WTC11 (cell line): ENCODE measurements at regions of chr2 and their contacts with region 1.

Region 1: DNA sequence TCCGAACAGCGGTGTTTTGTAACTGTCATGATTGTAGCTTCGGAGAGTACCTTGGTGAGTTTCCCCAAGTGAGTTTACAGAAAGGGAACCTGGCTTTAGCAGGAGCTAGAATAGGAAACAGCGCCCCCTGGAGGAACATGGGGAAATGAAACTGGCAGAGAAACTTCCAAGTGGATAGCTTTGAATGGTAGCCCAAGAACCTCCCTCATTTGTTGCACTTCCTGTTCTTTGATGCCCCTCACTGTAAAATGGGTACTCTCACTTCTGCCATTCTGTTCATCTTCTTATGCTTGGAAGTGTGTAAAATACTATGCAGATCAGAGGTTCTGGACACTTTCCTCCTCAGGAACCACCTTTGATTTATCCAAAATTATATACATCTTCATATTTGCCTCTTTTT is 36.2 kb downstream of the CHST10 start:
- DNase-seq: peak; percentile 91
- ATAC-seq: peak; percentile 89
- H3K4me3 Mint-ChIP-seq: no peak overlapping the region
- H3K27ac Mint-ChIP-seq: no peak overlapping the region
- H3K4me1 Mint-ChIP-seq: 0 out of 2 replicates have a peak, but pooled peaks cover 2% of the 10 kb centered on the region
- H3K27me3 Mint-ChIP-seq: no peaks in the 10 kb centered on the region
- CTCF ChIP-seq: peak; percentile 95

Region 2: GRCh38 chr2:100272841-100273329 is 108.4 kb before region 1 on chr2:
- CTCF ChIA-PET with region 1: interaction called, 14 read pairs
- POLR2A ChIA-PET with region 1: no interaction called
- DNase-seq: no peak
- ATAC-seq: no peak
- H3K4me3 Mint-ChIP-seq: no peak overlapping the region
- H3K27ac Mint-ChIP-seq: no peak overlapping the region
- H3K4me1 Mint-ChIP-seq: peaks cover 5% of the 10 kb centered on the region; the same call in 1 of the 2 replicates
- H3K27me3 Mint-ChIP-seq: no peaks in the 10 kb centered on the region
- CTCF ChIP-seq: no peak

Region 3: GRCh38 chr2:100321181-100321865 is 59.9 kb before region 1 on chr2:
- CTCF ChIA-PET with region 1: interaction called, 17 read pairs
- POLR2A ChIA-PET with region 1: interaction called, 3 read pairs
- DNase-seq: peak; percentile 75
- ATAC-seq: peak; percentile 89
- H3K4me3 Mint-ChIP-seq: peak overlapping the region; percentile 55
- H3K27ac Mint-ChIP-seq: no peak overlapping the region
- H3K4me1 Mint-ChIP-seq: peaks cover 5% of the 10 kb centered on the region
- H3K27me3 Mint-ChIP-seq: peaks cover 61% of the 10 kb centered on the region
- CTCF ChIP-seq: no peak

Region 4: GRCh38 chr2:100365434-100365833 is 15.8 kb before region 1 on chr2:
- CTCF ChIA-PET with region 1: interaction called, 36 read pairs
- POLR2A ChIA-PET with region 1: no interaction called
- DNase-seq: no peak
- ATAC-seq: no peak
- H3K4me3 Mint-ChIP-seq: no peak overlapping the region
- H3K27ac Mint-ChIP-seq: no peak overlapping the region
- H3K4me1 Mint-ChIP-seq: peaks cover 16% of the 10 kb centered on the region
- H3K27me3 Mint-ChIP-seq: peaks cover 11% of the 10 kb centered on the region; the same call in 1 of the 2 replicates
- CTCF ChIP-seq: no peak

Region 5: GRCh38 chr2:100422320-100423055 is 41.2 kb after region 1 on chr2:
- CTCF ChIA-PET with region 1: interaction called, 10 read pairs
- POLR2A ChIA-PET with region 1: no interaction called
- DNase-seq: peak; percentile 60
- ATAC-seq: peak; percentile 91
- H3K4me3 Mint-ChIP-seq: no peak overlapping the region
- H3K27ac Mint-ChIP-seq: no peak overlapping the region
- H3K4me1 Mint-ChIP-seq: peaks cover 14% of the 10 kb centered on the region
- H3K27me3 Mint-ChIP-seq: no peaks in the 10 kb centered on the region
- CTCF ChIP-seq: 0 out of 2 replicates have a peak, but pooled peaks have one; percentile 25

Region 6: GRCh38 chr2:100554798-100555407 is 173.7 kb after region 1 on chr2:
- CTCF ChIA-PET with region 1: no interaction called
- POLR2A ChIA-PET with region 1: no interaction called
- DNase-seq: no peak
- ATAC-seq: peak; percentile 57
- H3K4me3 Mint-ChIP-seq: no peak overlapping the region
- H3K27ac Mint-ChIP-seq: no peak overlapping the region
- H3K4me1 Mint-ChIP-seq: peaks cover 7% of the 10 kb centered on the region
- H3K27me3 Mint-ChIP-seq: no peaks in the 10 kb centered on the region
- CTCF ChIP-seq: no peak